ENCODE measurements at regions of chr9 and their contacts with region 1.

Region 1: GRCh38 chr9:130689937-130690700 is 3.5 kb upstream of the EXOSC2 start:
- DNase-seq: peak; percentile 98
- H3K4me3 ChIP-seq: peak overlapping the region; percentile 52 to 61 (median 59)
- H3K27ac ChIP-seq: peak overlapping the region; percentile 38
- H3K4me1 ChIP-seq: peaks cover 15% of the 10 kb centered on the region
- H3K27me3 ChIP-seq: no peaks in the 10 kb centered on the region
- CTCF ChIP-seq: no peak

Region 2: DNA sequence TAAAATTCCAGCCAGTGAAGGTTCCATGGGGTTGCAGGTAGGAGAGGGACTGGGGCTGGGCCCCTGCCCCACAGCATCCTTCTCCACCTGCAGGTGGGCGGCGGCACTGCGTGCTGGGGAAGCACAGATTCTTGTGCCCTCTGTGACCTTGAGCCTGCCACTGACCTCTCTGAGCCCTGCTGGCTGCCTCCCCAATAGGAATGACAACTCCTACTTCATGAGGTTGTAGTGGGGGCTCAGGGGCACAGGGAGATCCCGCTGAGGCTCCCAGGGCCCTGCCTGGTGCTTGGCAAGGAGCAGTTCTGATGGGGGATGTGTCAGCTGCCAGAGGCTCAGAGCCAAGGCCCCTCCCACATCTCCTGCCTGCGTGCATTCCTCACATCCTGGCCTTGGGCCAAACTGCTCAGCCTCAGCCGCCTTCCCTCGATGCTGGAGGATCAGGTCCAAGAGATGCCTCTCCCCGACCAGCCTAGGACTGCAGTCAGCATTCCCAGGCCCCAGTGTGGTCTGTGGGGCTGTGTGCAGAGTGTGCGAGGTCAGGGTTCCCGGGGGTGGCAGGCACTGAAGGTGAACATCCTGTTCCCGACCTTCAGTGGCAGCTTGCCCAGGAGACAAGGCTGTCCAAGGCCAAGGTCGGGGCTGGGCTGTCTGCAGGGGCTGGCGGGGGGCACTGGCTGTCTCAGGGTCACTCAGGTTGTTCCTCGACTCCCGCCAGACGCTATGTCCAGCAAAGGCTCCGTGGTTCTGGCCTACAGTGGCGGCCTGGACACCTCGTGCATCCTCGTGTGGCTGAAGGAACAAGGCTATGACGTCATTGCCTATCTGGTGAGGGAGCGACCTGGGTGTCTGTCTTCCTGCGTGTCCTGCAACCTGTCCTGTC is 238.4 kb before region 1 on chr9:
- CTCF ChIA-PET with region 1: no interaction called
- dilution Hi-C with region 1: no loop called
- in situ Hi-C with region 1: loop called (anchors 5 to 10 kb)
- intact Hi-C with region 1: no loop called
- DNase-seq: peak; percentile 84
- H3K4me3 ChIP-seq: no peak overlapping the region
- H3K27ac ChIP-seq: no peak overlapping the region
- H3K4me1 ChIP-seq: peaks cover 28% of the 10 kb centered on the region
- H3K27me3 ChIP-seq: no peaks in the 10 kb centered on the region
- CTCF ChIP-seq: peak; percentile 62 to 68

Region 3: GRCh38 chr9:130461218-130461630 is 228.9 kb before region 1 on chr9:
- CTCF ChIA-PET with region 1: no interaction called
- dilution Hi-C with region 1: loop called (anchors 5 kb)
- in situ Hi-C with region 1: loop called in 1 of 2 experiments (anchors 10 kb)
- intact Hi-C with region 1: no loop called
- DNase-seq: peak; percentile 16
- H3K4me3 ChIP-seq: no peak overlapping the region
- H3K27ac ChIP-seq: no peak overlapping the region
- H3K4me1 ChIP-seq: no peaks in the 10 kb centered on the region
- H3K27me3 ChIP-seq: no peaks in the 10 kb centered on the region
- CTCF ChIP-seq: peak; percentile 53 to 81

Region 4: GRCh38 chr9:130732131-130732530 is 42.0 kb after region 1 on chr9:
- CTCF ChIA-PET with region 1: no interaction called
- dilution Hi-C with region 1: no loop called
- in situ Hi-C with region 1: no loop called
- intact Hi-C with region 1: no loop called
- DNase-seq: peak; percentile 15
- H3K4me3 ChIP-seq: no peak overlapping the region
- H3K27ac ChIP-seq: no peak overlapping the region
- H3K4me1 ChIP-seq: peaks cover 17% of the 10 kb centered on the region
- H3K27me3 ChIP-seq: no peaks in the 10 kb centered on the region
- CTCF ChIP-seq: peak in 1 of 2 donors; percentile 7